ENCODE measurements at regions of chr12 and their contacts with region 1.

Region 1: GRCh38 chr12:48183091-48183875 is at the start of gene CCDC184:
- DNase-seq: peak; percentile 76
- H3K4me3 Mint-ChIP-seq: peak within 1 kb of the TSS; percentile 91
- H3K27ac Mint-ChIP-seq: peak within 1 kb of the TSS; percentile 82
- H3K4me1 Mint-ChIP-seq: peaks cover 35% of the 10 kb centered on the region
- H3K27me3 Mint-ChIP-seq: peaks cover 52% of the 10 kb centered on the region
- total RNA-seq, gene CCDC184: 0.61 and 0.75 TPM in 2 replicates

Region 2: DNA sequence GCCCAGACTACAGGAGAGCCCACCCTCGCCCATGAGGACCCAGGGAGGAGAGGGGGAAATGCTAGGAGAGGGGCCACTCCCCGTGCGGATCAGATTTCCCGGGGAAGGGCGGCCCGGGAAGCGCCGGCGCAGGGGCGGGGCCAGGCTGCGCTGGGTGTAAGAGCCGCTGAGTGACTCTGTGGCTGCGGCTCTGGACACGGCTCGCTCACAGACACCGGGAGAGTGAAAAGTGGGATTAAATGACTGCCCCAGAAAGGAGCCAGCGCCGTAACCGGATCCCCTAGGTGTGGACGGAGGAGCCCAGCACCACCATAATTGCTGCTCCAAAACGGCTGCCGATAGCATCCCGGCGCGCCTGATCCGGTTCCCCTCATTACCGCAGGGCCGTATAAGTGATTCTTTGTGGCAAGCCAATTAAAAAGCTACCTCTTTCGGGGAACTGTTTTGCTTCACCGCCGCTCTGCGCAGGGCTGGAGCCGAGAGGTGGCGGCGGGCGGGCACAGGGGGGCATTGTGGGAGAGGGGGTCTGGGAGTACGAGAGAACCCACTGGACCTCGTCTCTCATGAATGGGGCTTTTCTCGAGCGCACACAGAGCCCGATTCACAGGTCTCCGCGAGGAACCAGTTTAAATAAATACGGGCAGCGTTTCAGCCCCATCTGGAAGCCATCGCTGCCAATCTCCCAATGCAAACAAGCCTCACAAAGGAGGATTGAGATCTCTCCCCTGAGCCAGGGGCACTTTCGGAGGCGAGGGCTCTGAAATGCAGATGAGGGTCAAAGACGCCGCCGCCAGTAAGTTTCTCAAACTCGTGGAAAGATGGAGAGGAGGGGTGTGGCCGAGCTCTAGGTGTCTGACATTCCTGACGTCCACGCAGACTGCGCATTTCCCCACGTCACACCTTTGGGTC is 181.5 kb before region 1 on chr12:
- intact Hi-C with region 1: loop called (anchors 5 kb)
- DNase-seq: no peak
- H3K4me3 Mint-ChIP-seq: peak overlapping the region; percentile 54
- H3K27ac Mint-ChIP-seq: peak overlapping the region; percentile 36
- H3K4me1 Mint-ChIP-seq: peaks cover 32% of the 10 kb centered on the region
- H3K27me3 Mint-ChIP-seq: peaks cover 87% of the 10 kb centered on the region

Measured in activated T-helper 1 cell treated with anti-CD3 and anti-CD28 coated beads, Interleukin-12 subunit alpha, Interleukin-12 subunit beta, Interleukin-2, Interleukin-4 antibody, amounts not matched to agents 30 ng/mL and 10 ng/mL and 1 ng/mL, durations not matched to agents 14 hours and 24 hours and 36 hours (primary cell).